Activated CD4-positive, alpha-beta T cell treated with anti-CD3 and anti-CD28 coated beads, Interleukin-2, amount 10 ng/mL, durations not matched to agents 7 days and 5 days (primary cell): ENCODE measurements at regions of chr1 and their contacts with region 1.

Region 1: GRCh38 chr1:53278201-53278725 is 39.9 kb upstream of the MAGOH start:
- DNase-seq: peak; percentile 76
- H3K4me3 Mint-ChIP-seq: no peak overlapping the region
- H3K27ac Mint-ChIP-seq: peak overlapping the region; percentile 58
- H3K4me1 Mint-ChIP-seq: peaks cover 2% of the 10 kb centered on the region
- H3K27me3 Mint-ChIP-seq: no peaks in the 10 kb centered on the region

Region 2: DNA sequence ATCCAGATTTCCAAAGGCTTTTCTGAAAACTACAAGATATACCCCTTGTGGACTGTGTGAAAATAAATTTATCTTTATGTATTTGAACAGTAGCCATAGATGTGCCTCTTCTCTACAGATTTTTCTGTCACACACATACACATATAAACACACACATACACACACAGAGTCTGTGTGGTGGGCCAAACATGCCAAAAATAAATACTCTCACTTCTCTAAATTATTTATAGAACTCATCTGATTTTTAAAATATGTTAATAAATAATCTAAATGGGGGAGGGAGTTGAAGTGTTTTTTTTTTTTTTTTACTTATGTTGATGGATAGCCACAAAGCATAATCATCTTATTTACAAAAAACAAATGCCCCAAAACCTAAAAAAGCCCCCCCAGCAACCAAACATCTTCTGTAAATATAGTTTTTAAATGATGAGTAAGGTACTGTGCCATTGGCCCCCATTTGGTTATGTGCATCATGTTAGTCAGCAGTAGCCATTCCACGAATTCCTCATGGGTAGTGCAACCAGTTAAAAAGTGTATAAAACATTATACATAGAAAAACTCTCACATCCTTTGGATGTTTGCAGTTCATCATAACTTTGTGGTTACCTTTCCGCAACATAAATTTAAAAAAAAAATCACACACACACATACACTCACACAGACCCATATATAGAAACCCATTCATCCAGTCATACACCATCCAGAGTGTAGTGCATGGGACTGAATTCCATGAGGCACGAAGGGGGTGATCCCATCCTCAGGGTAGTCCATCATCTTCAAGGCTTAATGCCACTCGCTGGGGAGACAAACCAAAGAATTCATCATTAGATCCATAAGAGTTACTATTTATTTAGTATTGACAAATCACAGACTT is 31.8 kb before region 1 on chr1:
- CTCF ChIA-PET with region 1: no interaction called
- POLR2A ChIA-PET with region 1: no interaction called
- DNase-seq: no peak
- H3K4me3 Mint-ChIP-seq: no peak overlapping the region
- H3K27ac Mint-ChIP-seq: no peak overlapping the region
- H3K4me1 Mint-ChIP-seq: no peaks in the 10 kb centered on the region
- H3K27me3 Mint-ChIP-seq: no peaks in the 10 kb centered on the region

Region 3: GRCh38 chr1:53293123-53293522 is 14.9 kb after region 1 on chr1:
- CTCF ChIA-PET with region 1: interaction called, 13 read pairs
- POLR2A ChIA-PET with region 1: no interaction called
- DNase-seq: no peak
- H3K4me3 Mint-ChIP-seq: no peak overlapping the region
- H3K27ac Mint-ChIP-seq: peak overlapping the region; percentile 82
- H3K4me1 Mint-ChIP-seq: peaks cover 42% of the 10 kb centered on the region
- H3K27me3 Mint-ChIP-seq: no peaks in the 10 kb centered on the region

Region 4: DNA sequence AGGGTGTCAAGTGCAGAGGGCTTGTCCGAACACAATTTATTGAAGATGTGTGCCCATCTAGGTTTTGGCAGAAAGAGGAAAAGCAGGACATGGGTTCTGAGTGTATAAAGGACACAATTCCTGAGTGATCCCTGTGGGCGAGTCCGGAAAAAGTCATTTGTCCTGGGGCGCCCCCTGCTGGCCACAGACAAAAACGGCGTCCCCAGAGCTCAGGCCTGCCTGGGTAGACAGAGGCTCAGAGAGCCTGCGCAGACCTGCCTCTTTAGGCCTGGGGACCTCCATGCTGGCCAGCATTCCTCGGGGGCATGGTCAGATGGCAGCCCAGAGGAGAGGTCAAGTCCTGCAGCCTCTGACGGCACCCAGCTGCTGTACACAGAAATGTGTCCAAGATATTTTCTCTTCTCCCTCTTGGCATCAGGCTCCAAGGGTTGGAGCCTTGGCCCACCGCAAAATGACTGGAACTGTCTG is 115.1 kb after region 1 on chr1:
- CTCF ChIA-PET with region 1: interaction called, 12 read pairs
- POLR2A ChIA-PET with region 1: no interaction called
- DNase-seq: peak; percentile 69
- H3K4me3 Mint-ChIP-seq: no peak overlapping the region
- H3K27ac Mint-ChIP-seq: no peak overlapping the region
- H3K4me1 Mint-ChIP-seq: no peaks in the 10 kb centered on the region
- H3K27me3 Mint-ChIP-seq: peaks cover 3% of the 10 kb centered on the region